Esophagus muscularis mucosa (tissue), 4 donors: ENCODE measurements at regions of chr7 and their contacts with region 1.

Region 1: DNA sequence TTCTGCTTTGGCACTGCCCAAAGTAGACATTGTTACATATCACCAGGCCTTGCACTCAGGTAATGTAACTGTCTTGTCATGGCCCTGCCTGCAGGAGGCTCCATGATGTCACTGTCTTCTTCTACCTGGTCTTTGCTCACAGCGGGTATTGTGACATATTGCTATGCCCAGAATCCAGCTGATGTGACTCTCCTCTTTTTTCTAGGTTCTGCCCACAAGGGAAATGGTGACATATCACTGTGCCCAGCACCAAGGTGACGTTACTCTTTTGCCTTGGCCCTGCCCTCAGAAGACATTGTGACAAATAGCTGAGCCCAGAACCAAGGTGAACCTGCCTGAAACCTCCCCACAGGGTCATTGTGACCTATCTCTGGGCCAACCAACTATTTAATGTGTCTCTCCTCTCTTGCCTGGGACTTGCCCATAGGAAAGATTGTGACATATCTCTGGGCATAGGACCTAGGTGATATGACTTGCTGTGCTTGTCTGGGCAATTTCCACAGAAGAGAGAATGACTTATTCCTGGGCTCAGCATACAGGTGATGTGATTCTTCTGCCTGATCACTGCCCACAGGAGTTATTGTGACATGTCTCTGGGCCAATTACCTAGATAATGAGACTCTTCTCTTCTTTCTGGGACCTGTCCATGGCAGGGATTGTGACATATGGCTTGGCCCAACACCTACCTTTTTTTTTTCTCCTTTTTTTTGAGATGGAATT is 26.5 kb upstream of the ZNF107 start:
- DNase-seq: no peak
- H3K4me3 ChIP-seq: no peak overlapping the region
- H3K27ac ChIP-seq: no peak overlapping the region
- H3K4me1 ChIP-seq: no peaks in the 10 kb centered on the region
- H3K27me3 ChIP-seq: no peaks in the 10 kb centered on the region
- CTCF ChIP-seq: no peak
- EP300 ChIP-seq: no peak
- POLR2A ChIP-seq: no peak

Region 2: DNA sequence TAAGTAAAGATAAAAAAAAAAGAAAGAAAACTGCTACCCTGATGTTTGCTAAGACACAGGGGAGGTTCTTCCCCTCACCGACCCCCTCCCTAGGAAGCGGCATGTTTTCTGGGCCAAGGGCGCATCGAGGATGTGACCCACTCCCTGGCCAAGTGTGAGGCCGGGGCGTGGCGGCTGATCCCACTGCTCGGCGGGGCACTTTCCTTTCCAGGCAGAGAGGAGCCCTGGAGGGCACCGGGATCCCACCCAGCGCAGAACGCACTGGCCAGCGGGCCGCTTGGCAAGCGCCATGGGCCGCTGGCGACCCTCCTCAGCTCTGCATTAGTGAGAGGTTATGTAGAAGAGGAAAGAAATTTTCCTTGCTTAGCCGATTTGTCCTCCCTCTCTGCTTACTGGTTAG is 232.3 kb before region 1 on chr7:
- intact Hi-C with region 1: no loop called
- DNase-seq: no peak
- H3K4me3 ChIP-seq: no peak overlapping the region
- H3K27ac ChIP-seq: no peak overlapping the region
- H3K4me1 ChIP-seq: no peaks in the 10 kb centered on the region
- H3K27me3 ChIP-seq: no peaks in the 10 kb centered on the region
- CTCF ChIP-seq: no peak
- EP300 ChIP-seq: no peak
- POLR2A ChIP-seq: no peak

Region 3: GRCh38 chr7:64574540-64575126 is 64.8 kb before region 1 on chr7:
- intact Hi-C with region 1: no loop called
- DNase-seq: no peak
- H3K4me3 ChIP-seq: peak overlapping the region; percentile 43 to 52 (median 48)
- H3K27ac ChIP-seq: no peak overlapping the region
- H3K4me1 ChIP-seq: peaks cover 0 to 21% (median 18%) of the 10 kb centered on the region in 4 donors
- H3K27me3 ChIP-seq: peaks cover 0 to 12% (median 2%) of the 10 kb centered on the region in 4 donors
- CTCF ChIP-seq: no peak
- EP300 ChIP-seq: no peak
- POLR2A ChIP-seq: no peak

Region 4: GRCh38 chr7:64706625-64707292 is 67.3 kb after region 1 on chr7:
- intact Hi-C with region 1: loop called (anchors 10 kb)
- DNase-seq: no peak
- H3K4me3 ChIP-seq: no peak overlapping the region
- H3K27ac ChIP-seq: no peak overlapping the region
- H3K4me1 ChIP-seq: no peaks in the 10 kb centered on the region
- H3K27me3 ChIP-seq: no peaks in the 10 kb centered on the region
- CTCF ChIP-seq: no peak
- EP300 ChIP-seq: no peak
- POLR2A ChIP-seq: no peak